ENCODE measurements at regions of chr6 and their contacts with region 1.

Region 1: GRCh38 chr6:150184850-150185731 is 42.2 kb downstream of the PPP1R14C start:
- DNase-seq: no peak
- H3K4me3 ChIP-seq: no peak overlapping the region
- H3K27ac ChIP-seq: no peak overlapping the region
- H3K4me1 ChIP-seq: no peaks in the 10 kb centered on the region
- H3K27me3 ChIP-seq: no peaks in the 10 kb centered on the region
- CTCF ChIP-seq: no peak
- EP300 ChIP-seq: no peak
- POLR2A ChIP-seq: no peak

Region 2: GRCh38 chr6:150286912-150287311 is 101.8 kb after region 1 on chr6:
- intact Hi-C with region 1: no loop called
- DNase-seq: no peak
- H3K4me3 ChIP-seq: no peak overlapping the region
- H3K27ac ChIP-seq: no peak overlapping the region
- H3K4me1 ChIP-seq: no peaks in the 10 kb centered on the region
- H3K27me3 ChIP-seq: no peaks in the 10 kb centered on the region
- CTCF ChIP-seq: no peak
- EP300 ChIP-seq: no peak
- POLR2A ChIP-seq: no peak

Region 3: GRCh38 chr6:150949526-150949925 is 764.4 kb after region 1 on chr6:
- intact Hi-C with region 1: loop called in 1 of 4 experiments (anchors 5 kb)
- DNase-seq: no peak
- H3K4me3 ChIP-seq: no peak overlapping the region
- H3K27ac ChIP-seq: no peak overlapping the region
- H3K4me1 ChIP-seq: no peaks in the 10 kb centered on the region
- H3K27me3 ChIP-seq: no peaks in the 10 kb centered on the region
- CTCF ChIP-seq: no peak
- EP300 ChIP-seq: no peak
- POLR2A ChIP-seq: no peak

Measured in ovary (tissue), 10 donors.